ENCODE measurements at regions of chr9 and their contacts with region 1.

Region 1: GRCh38 chr9:89919169-89919681 is 314.4 kb downstream of the GADD45G start:
- DNase-seq: peak; percentile 33 to 56
- ATAC-seq: peak; percentile 86 to 95 (median 94)
- H3K4me3 ChIP-seq: no peak overlapping the region
- H3K27ac ChIP-seq: no peak overlapping the region
- H3K4me1 ChIP-seq: peaks cover 0 to 22% (median 0%) of the 10 kb centered on the region in 9 donors
- H3K27me3 ChIP-seq: peaks cover 0 to under 1% (median 0%) of the 10 kb centered on the region in 7 donors
- CTCF ChIP-seq: peak; percentile 4 to 71 (median 52)

Region 2: GRCh38 chr9:89623925-89624420 is 295.3 kb before region 1 on chr9:
- intact Hi-C with region 1: loop called in 1 of 10 experiments (anchors 10 kb)
- DNase-seq: peak in 1 of 2 donors; percentile 50
- ATAC-seq: peak; percentile 27 to 88 (median 68)
- H3K4me3 ChIP-seq: no peak overlapping the region
- H3K27ac ChIP-seq: peak overlapping the region; percentile 25 to 88 (median 56)
- H3K4me1 ChIP-seq: peaks cover 8 to 42% (median 28%) of the 10 kb centered on the region in 9 donors
- H3K27me3 ChIP-seq: peaks cover 0 to 6% (median 0%) of the 10 kb centered on the region in 7 donors
- CTCF ChIP-seq: peak in 4 of 9 donors; percentile 26 to 35 (median 30)

Region 3: DNA sequence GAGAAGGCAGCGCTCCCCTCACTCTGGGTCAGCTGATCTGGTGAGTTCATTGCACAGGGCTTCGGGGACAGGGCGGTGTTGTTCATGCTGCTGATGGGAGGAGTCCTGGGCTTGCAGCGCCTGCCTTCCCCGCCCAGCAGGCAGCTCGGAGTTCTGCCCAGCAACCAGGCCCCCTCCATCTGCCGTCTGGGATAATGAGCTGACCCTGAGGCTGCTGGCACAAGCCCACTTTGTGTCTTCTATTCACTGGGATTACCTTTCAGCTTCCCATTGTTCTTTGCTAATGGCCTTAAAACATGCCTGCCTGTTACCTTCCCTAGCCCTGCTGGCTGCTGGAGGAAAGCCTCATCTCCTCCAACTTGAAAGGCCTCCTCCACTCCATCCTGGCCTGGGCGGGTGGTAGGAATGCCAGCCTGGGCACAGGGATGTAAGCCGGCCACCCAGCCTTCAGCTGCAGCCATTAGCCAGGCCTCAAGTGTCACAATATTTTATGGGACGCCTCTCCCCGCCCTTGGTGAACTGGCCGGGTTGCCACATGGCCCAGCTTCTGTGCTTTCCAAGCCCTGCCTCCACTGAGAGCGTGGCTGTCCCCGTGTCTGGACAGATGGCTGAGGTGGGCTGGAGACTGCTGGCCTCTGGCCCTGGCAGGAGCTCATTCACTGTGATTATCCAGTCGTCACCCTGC is 244.0 kb before region 1 on chr9:
- intact Hi-C with region 1: loop called in 1 of 10 experiments (anchors 5 kb)
- DNase-seq: peak; percentile 62 to 70
- ATAC-seq: peak; percentile 74 to 88 (median 86)
- H3K4me3 ChIP-seq: no peak overlapping the region
- H3K27ac ChIP-seq: peak overlapping the region in 8 of 10 donors; percentile 15 to 79 (median 49)
- H3K4me1 ChIP-seq: peaks cover 0 to 34% (median 20%) of the 10 kb centered on the region in 9 donors
- H3K27me3 ChIP-seq: no peaks in the 10 kb centered on the region
- CTCF ChIP-seq: no peak

Region 4: GRCh38 chr9:89802781-89803355 is 116.4 kb before region 1 on chr9:
- intact Hi-C with region 1: loop called in 1 of 10 experiments (anchors 10 kb)
- DNase-seq: peak; percentile 75
- ATAC-seq: peak; percentile 75 to 94 (median 90)
- H3K4me3 ChIP-seq: no peak overlapping the region
- H3K27ac ChIP-seq: peak overlapping the region in 1 of 10 donors; percentile 22
- H3K4me1 ChIP-seq: peaks cover 3 to 40% (median 22%) of the 10 kb centered on the region in 9 donors
- H3K27me3 ChIP-seq: no peaks in the 10 kb centered on the region
- CTCF ChIP-seq: no peak

Region 5: DNA sequence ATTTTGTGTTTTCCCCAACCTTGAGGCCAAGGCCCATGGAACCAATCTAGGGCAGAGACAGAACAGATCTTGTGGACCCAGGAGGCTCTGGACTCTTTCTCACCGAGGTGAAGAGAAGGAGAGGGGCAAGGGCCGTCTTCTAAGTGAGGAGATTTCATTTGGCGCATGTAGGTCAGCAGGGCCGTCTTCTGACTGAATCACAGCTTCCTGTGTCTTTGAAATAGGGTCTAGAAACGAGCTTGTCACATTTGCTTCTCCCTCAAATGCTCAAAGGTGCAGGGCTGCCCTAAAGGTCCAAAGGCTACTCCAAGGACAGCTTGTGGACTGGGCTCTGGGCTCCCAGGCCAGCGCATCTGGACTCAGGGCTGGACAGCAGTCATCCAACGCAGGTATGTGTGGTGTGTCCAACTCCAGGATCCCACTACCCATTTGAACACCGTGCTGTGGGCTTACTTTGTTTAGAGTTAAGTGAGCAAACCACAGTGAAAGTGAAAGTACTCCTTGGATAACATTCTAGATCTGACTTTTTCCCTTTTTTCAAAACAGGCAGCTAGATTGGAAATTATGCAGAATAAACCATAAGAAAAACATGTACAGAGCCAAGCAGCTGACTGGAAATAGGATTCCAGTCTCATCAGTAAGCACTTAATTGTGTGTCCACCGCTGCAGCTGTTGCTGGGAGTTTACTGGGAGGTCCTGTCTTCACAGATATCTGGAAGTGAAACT is 42.6 kb after region 1 on chr9:
- intact Hi-C with region 1: loop called in 1 of 10 experiments (anchors 1 kb)
- DNase-seq: no peak
- ATAC-seq: peak in 3 of 8 donors; percentile 23 to 46 (median 35)
- H3K4me3 ChIP-seq: peak overlapping the region in 3 of 10 donors; percentile 10 to 22 (median 19)
- H3K27ac ChIP-seq: peak overlapping the region in 2 of 10 donors; percentile 1 to 73
- H3K4me1 ChIP-seq: peaks cover 0 to 31% (median 0%) of the 10 kb centered on the region in 9 donors
- H3K27me3 ChIP-seq: no peaks in the 10 kb centered on the region
- CTCF ChIP-seq: no peak

Region 6: GRCh38 chr9:90287567-90288274 is 368.5 kb after region 1 on chr9:
- intact Hi-C with region 1: no loop called
- DNase-seq: no peak
- ATAC-seq: no peak
- H3K4me3 ChIP-seq: no peak overlapping the region
- H3K27ac ChIP-seq: no peak overlapping the region
- H3K4me1 ChIP-seq: no peaks in the 10 kb centered on the region
- H3K27me3 ChIP-seq: peaks cover 0 to 11% (median 0%) of the 10 kb centered on the region in 7 donors
- CTCF ChIP-seq: no peak

Measured in heart right ventricle (tissue), 16 donors.